ENCODE measurements at regions of chr16 and their contacts with region 1.

Region 1: DNA sequence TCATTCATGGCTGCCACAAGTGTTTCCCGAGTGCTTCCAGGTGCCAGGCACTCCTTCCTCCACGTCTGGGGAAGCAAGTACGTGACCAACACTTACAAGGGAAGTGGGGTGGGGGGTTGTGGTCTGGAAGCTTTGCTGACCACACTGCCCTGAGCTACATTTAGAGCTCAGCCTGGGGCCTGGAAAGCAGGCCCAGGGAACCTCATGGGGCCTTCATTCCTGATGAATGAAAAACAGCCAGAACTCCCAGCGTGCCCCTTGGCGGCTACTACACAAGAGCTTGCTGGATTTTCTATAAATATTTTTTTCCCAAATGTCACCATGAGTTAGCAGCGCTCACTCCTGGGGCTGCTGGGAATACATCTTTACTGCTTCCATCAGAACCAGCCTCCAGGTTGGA is 73.3 kb downstream of the ABCC12 start:
- DNase-seq: no peak
- H3K4me3 ChIP-seq: no peak overlapping the region
- H3K27ac ChIP-seq: no peak overlapping the region
- H3K4me1 ChIP-seq: no peaks in the 10 kb centered on the region
- H3K27me3 ChIP-seq: peaks cover 35% of the 10 kb centered on the region
- CTCF ChIP-seq: no peak

Region 2: DNA sequence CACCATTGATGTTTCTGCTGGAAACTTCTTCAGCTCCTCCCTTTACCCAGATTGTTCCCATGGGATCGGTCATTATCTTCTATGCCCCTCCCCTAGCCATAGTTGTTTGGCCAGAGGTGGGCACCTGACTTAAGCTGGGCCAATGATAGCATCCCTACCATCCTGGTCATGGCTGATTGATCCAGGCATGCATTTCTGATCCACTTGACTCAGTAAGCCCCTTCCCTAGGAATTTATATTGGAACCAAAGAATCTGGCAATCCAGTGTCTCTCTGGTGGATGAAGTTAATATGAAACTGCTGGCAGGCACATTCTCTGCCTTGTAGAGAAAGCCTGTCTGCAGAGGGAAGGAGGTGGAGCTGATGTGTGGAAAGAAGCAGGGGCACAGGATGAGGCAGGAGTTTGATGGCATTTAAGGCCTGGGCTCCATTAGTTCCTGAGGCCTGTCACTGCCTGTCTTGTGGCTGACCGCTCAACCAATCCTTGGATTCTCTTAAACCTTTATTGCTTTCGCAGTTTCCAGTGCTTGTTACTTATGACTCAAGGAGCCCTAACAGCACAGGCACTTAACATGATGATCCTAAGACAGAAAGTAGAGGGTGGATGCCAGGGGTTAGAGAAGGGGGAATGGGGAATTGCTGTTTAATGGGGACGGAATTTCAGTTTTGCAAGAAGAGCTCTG is 79.1 kb before region 1 on chr16:
- CTCF ChIA-PET with region 1: no interaction called
- POLR2A ChIA-PET with region 1: no interaction called
- intact Hi-C with region 1: no loop called
- DNase-seq: peak; percentile 51
- H3K4me3 ChIP-seq: no peak overlapping the region
- H3K27ac ChIP-seq: no peak overlapping the region
- H3K4me1 ChIP-seq: no peaks in the 10 kb centered on the region
- H3K27me3 ChIP-seq: no peaks in the 10 kb centered on the region
- CTCF ChIP-seq: no peak

Region 3: GRCh38 chr16:48182979-48183537 is 100.5 kb after region 1 on chr16:
- CTCF ChIA-PET with region 1: no interaction called
- POLR2A ChIA-PET with region 1: no interaction called
- intact Hi-C with region 1: no loop called
- DNase-seq: no peak
- H3K4me3 ChIP-seq: no peak overlapping the region
- H3K27ac ChIP-seq: no peak overlapping the region
- H3K4me1 ChIP-seq: no peaks in the 10 kb centered on the region
- H3K27me3 ChIP-seq: no peaks in the 10 kb centered on the region
- CTCF ChIP-seq: no peak

Region 4: DNA sequence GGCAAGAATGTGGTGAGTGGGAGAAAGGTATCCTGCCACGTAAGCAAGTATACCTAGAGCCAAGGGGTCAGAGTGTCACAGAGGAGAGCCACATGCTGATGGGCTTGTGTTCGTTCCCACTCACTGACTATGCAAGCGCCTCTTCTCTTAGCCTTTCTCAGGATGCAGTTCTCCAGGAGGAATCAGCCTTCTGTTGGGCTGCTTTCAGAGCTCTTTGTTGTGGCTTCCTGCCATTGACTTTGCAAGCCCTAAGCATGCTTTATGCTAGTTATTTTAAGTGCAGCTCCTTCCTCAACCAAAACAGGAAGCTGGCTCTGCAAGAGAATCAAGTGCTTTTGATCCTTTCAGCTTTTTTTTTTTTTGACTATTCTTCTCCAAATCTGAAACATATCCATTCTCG is 236.1 kb after region 1 on chr16:
- CTCF ChIA-PET with region 1: no interaction called
- POLR2A ChIA-PET with region 1: interaction called, 15 read pairs
- intact Hi-C with region 1: no loop called
- DNase-seq: peak; percentile 5
- H3K4me3 ChIP-seq: no peak overlapping the region
- H3K27ac ChIP-seq: no peak overlapping the region
- H3K4me1 ChIP-seq: peaks cover 9% of the 10 kb centered on the region
- H3K27me3 ChIP-seq: no peaks in the 10 kb centered on the region
- CTCF ChIP-seq: no peak

Measured in A673 (cell line).